Activated naive CD4-positive, alpha-beta T cell treated with anti-CD3 and anti-CD28 coated beads, Interleukin-2, amount 10 ng/mL, durations not matched to agents 7 days and 5 days (primary cell): ENCODE measurements at regions of chr11 and their contacts with region 1.

Region 1: GRCh38 chr11:74739546-74740270 is 8.5 kb upstream of the CHRDL2 start:
- DNase-seq: peak; percentile 54
- H3K4me3 Mint-ChIP-seq: no peak overlapping the region
- H3K27ac Mint-ChIP-seq: no peak overlapping the region
- H3K4me1 Mint-ChIP-seq: no peaks in the 10 kb centered on the region
- H3K27me3 Mint-ChIP-seq: peaks cover 28% of the 10 kb centered on the region

Region 2: GRCh38 chr11:74726547-74727182 is 13.0 kb before region 1 on chr11:
- CTCF ChIA-PET with region 1: interaction called, 26 read pairs
- DNase-seq: peak; percentile 68
- H3K4me3 Mint-ChIP-seq: no peak overlapping the region
- H3K27ac Mint-ChIP-seq: no peak overlapping the region
- H3K4me1 Mint-ChIP-seq: no peaks in the 10 kb centered on the region
- H3K27me3 Mint-ChIP-seq: peaks cover 84% of the 10 kb centered on the region

Region 3: DNA sequence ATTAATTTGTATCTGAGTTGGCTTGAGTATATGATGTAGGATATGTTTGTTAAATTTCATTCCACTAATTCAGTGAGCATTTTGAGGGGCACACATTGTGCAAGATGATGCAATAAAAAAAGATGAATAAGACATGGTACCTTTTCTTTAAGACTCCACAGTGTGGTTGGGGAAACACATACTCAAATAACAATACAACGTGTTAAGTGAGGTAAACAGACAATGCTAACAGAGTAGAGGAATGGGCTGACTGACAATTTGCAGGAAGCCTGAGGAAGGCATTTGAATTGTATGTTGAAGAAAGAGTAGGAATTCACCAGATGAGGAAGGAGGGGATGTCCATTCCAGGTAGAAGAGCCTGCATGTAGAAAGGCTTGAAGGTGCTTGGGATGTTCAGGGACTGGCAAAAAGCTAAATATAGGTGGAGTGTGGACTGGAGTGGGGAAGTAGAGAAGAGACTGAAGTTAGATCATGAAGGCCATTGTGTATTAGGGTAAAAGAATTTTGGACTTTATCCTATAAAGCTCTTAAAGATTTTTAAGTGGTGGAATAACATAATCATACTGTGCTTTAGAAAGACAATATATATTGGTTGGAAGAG is 15.8 kb after region 1 on chr11:
- CTCF ChIA-PET with region 1: interaction called, 10 read pairs
- DNase-seq: no peak
- H3K4me3 Mint-ChIP-seq: no peak overlapping the region
- H3K27ac Mint-ChIP-seq: no peak overlapping the region
- H3K4me1 Mint-ChIP-seq: peaks cover 5% of the 10 kb centered on the region
- H3K27me3 Mint-ChIP-seq: no peaks in the 10 kb centered on the region